IMR-90 (cell line): ENCODE measurements at regions of chr4 and their contacts with region 1.

Region 1: DNA sequence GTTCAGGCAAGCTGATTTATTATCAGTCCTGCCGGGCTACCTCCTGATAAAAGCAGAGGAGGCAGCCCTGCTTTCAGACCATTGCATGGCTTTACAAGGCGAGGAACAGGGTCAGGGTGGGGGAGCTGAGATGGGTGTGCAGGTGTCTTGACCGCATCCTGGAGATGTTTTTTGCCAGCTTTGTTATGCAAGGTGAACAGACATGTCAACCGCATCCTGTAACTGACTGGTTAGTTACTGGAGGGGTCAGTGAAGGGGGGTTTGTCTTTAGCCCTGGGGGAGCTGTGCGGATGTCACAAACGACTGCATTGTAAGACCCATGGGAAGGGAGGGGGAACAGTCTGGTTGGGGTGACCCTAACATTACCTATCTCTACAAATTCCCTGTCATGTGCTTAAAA is 10.0 kb downstream of the ADAM29 start:
- DNase-seq: no peak
- ATAC-seq: no peak
- H3K4me3 ChIP-seq: no peak overlapping the region
- H3K27ac ChIP-seq: no peak overlapping the region
- H3K4me1 ChIP-seq: no peaks in the 10 kb centered on the region
- H3K27me3 ChIP-seq: no peaks in the 10 kb centered on the region
- CTCF ChIP-seq: no peak
- POLR2A ChIP-seq: no peak
- RAD21 ChIP-seq: no peak

Region 2: GRCh38 chr4:175443547-175443946 is 515.4 kb after region 1 on chr4:
- CTCF ChIA-PET with region 1: no interaction called
- POLR2A ChIA-PET with region 1: no interaction called
- dilution Hi-C with region 1: no loop called
- in situ Hi-C with region 1: no loop called
- intact Hi-C with region 1: loop called (anchors 10 kb)
- DNase-seq: no peak
- ATAC-seq: no peak; the same call in 1 of the 2 replicates
- H3K4me3 ChIP-seq: no peak overlapping the region
- H3K27ac ChIP-seq: no peak overlapping the region
- H3K4me1 ChIP-seq: no peaks in the 10 kb centered on the region
- H3K27me3 ChIP-seq: no peaks in the 10 kb centered on the region
- CTCF ChIP-seq: peak; percentile 31
- POLR2A ChIP-seq: no peak
- RAD21 ChIP-seq: peak; percentile 33; the same call in 1 of the 2 replicates